Cardiac septum (tissue), 1 donor: ENCODE measurements at regions of chr11 and their contacts with region 1.

Region 1: GRCh38 chr11:128686745-128687177 is 7.1 kb upstream of the FLI1 start:
- DNase-seq: no peak

Region 2: DNA sequence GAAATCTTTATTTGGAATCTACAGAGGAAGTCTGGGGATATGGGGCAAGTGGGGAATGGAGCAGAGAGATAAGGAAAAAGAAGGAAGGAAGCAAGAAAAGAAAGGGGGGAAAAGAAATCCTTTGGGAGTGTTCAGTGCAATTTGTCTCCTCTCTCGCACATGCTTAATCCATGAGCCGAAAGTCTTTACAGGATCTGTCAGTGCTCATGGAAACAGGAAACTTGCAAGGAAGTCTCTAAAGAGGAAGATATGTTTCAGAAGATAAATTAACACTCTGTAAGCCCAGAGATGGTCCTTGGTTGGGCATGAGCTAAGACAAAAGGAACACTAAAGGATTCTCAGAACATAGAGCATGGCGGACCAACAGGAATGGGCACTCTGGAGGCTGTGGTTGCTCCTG is 40.8 kb before region 1 on chr11:
- intact Hi-C with region 1: loop called (anchors 5 kb)
- DNase-seq: no peak